Activated CD4-positive, alpha-beta T cell treated with anti-CD3 and anti-CD28 coated beads for 36 hours (primary cell): ENCODE measurements at regions of chr10 and their contacts with region 1.

Region 1: DNA sequence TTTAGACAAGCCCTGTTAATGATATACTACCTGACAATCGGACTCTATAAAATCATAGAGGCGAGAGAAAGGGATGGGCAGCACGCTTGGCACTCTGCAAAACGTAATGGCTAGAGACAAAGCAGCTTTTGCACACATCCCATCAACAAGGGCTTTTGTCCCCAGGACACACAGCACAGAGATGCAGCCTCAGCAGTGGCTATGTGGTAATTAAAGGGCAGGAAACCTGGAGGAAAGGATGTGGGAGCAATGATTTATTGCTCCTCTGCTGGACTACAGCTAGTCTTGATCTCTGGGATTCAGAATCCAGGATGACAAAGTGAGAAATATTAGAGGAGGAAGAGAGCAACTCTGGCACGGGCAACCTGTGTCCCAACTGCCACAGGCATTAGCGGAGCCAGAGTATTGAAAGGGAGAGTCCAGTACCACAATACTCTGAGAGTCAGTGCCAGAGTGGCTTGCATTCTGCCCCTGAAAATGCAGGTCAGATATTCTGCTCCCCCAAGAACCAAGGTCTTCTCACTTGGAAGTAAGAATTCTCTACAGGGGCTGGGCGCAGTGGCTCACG is 96.5 kb downstream of the ARMH3 start:
- DNase-seq: no peak
- ATAC-seq: no peak
- H3K4me3 Mint-ChIP-seq: no peak overlapping the region
- H3K27ac Mint-ChIP-seq: no peak overlapping the region
- H3K4me1 Mint-ChIP-seq: no peaks in the 10 kb centered on the region
- H3K27me3 Mint-ChIP-seq: no peaks in the 10 kb centered on the region

Region 2: GRCh38 chr10:101797403-101798059 is 161.9 kb before region 1 on chr10:
- CTCF ChIA-PET with region 1: no interaction called
- POLR2A ChIA-PET with region 1: no interaction called
- intact Hi-C with region 1: no loop called
- DNase-seq: no peak
- ATAC-seq: no peak
- H3K4me3 Mint-ChIP-seq: no peak overlapping the region
- H3K27ac Mint-ChIP-seq: peak overlapping the region; percentile 13
- H3K4me1 Mint-ChIP-seq: peaks cover 12% of the 10 kb centered on the region
- H3K27me3 Mint-ChIP-seq: no peaks in the 10 kb centered on the region

Region 3: GRCh38 chr10:101941871-101942270 is 17.6 kb before region 1 on chr10:
- CTCF ChIA-PET with region 1: interaction called, 12 read pairs
- POLR2A ChIA-PET with region 1: no interaction called
- intact Hi-C with region 1: no loop called
- DNase-seq: no peak
- ATAC-seq: no peak
- H3K4me3 Mint-ChIP-seq: no peak overlapping the region
- H3K27ac Mint-ChIP-seq: no peak overlapping the region
- H3K4me1 Mint-ChIP-seq: peaks cover 6% of the 10 kb centered on the region
- H3K27me3 Mint-ChIP-seq: no peaks in the 10 kb centered on the region

Region 4: DNA sequence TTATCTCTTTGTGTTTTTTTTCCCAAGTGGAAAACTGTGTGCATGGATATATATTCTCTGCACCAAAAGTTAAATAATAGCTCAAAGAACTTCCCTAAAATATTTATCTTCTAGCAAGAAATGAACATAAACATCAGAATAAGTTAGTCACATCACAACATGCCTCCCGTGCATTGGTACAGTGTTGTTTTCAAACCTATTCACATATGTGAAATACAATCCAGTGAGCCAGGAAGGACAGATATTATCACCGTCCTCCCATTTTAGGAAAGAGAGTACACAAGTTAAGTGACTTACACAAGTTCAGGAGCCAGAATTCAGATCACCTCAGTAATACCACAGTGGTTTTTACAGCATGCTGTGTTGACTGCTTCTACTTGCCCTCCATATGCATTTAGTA is 74.4 kb after region 1 on chr10:
- CTCF ChIA-PET with region 1: no interaction called
- POLR2A ChIA-PET with region 1: no interaction called
- intact Hi-C with region 1: no loop called
- DNase-seq: no peak
- ATAC-seq: no peak
- H3K4me3 Mint-ChIP-seq: no peak overlapping the region
- H3K27ac Mint-ChIP-seq: no peak overlapping the region
- H3K4me1 Mint-ChIP-seq: no peaks in the 10 kb centered on the region
- H3K27me3 Mint-ChIP-seq: no peaks in the 10 kb centered on the region

Region 5: GRCh38 chr10:102220612-102221011 is 261.2 kb after region 1 on chr10:
- CTCF ChIA-PET with region 1: no interaction called
- POLR2A ChIA-PET with region 1: no interaction called
- intact Hi-C with region 1: no loop called
- DNase-seq: no peak
- ATAC-seq: no peak
- H3K4me3 Mint-ChIP-seq: no peak overlapping the region
- H3K27ac Mint-ChIP-seq: no peak overlapping the region
- H3K4me1 Mint-ChIP-seq: peaks cover 2% of the 10 kb centered on the region
- H3K27me3 Mint-ChIP-seq: peaks cover 11% of the 10 kb centered on the region

Region 6: GRCh38 chr10:102596506-102596971 is 637.1 kb after region 1 on chr10:
- CTCF ChIA-PET with region 1: no interaction called
- POLR2A ChIA-PET with region 1: no interaction called
- intact Hi-C with region 1: no loop called
- DNase-seq: peak; percentile 54
- ATAC-seq: peak; percentile 80
- H3K4me3 Mint-ChIP-seq: no peak overlapping the region
- H3K27ac Mint-ChIP-seq: no peak overlapping the region
- H3K4me1 Mint-ChIP-seq: no peaks in the 10 kb centered on the region
- H3K27me3 Mint-ChIP-seq: no peaks in the 10 kb centered on the region